Activated T-helper 1 cell treated with anti-CD3 and anti-CD28 coated beads, Interleukin-12 subunit alpha, Interleukin-12 subunit beta, Interleukin-2, Interleukin-4 antibody, amounts not matched to agents 30 ng/mL and 10 ng/mL and 1 ng/mL, durations not matched to agents 14 hours and 24 hours and 36 hours (primary cell): ENCODE measurements at regions of chr6 and their contacts with region 1.

Region 1: DNA sequence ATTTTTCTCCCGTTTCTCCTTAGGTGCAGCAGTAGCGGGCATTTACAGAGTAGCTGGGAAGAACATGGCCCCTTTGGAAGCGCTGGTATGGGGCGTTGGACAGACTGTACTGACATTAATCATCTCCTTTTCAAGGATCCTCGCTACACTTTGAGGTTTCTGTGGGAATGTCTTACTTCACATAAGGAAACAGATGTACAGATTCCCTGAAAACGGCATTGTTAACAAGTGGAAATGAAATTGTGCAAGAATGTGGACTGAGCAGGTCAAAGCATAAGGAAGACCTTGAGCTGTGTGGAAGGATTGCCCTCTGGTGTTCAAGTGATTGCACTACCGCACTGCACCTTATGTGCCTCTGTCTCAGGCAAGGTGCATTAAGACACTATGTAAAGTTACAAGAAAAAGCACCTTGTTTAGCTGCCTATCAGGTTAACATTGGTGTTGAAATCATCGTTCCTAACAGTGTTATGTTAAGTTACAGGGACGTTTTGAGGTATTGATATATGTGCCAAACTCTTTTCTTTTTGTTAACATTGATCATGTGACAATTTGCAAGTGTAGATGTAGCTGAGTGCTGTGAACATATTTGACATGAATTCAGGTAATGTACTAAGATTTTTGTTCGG is 38.0 kb downstream of the TMEM170B start:
- DNase-seq: peak; percentile 37
- H3K4me3 Mint-ChIP-seq: no peak overlapping the region
- H3K27ac Mint-ChIP-seq: no peak overlapping the region
- H3K4me1 Mint-ChIP-seq: no peaks in the 10 kb centered on the region
- H3K27me3 Mint-ChIP-seq: peaks cover 2% of the 10 kb centered on the region

Region 2: GRCh38 chr6:10954590-10955010 is 620.9 kb before region 1 on chr6:
- intact Hi-C with region 1: loop called (anchors 1 kb)
- DNase-seq: peak; percentile 50
- H3K4me3 Mint-ChIP-seq: no peak overlapping the region
- H3K27ac Mint-ChIP-seq: no peak overlapping the region
- H3K4me1 Mint-ChIP-seq: no peaks in the 10 kb centered on the region
- H3K27me3 Mint-ChIP-seq: peaks cover 7% of the 10 kb centered on the region

Region 3: DNA sequence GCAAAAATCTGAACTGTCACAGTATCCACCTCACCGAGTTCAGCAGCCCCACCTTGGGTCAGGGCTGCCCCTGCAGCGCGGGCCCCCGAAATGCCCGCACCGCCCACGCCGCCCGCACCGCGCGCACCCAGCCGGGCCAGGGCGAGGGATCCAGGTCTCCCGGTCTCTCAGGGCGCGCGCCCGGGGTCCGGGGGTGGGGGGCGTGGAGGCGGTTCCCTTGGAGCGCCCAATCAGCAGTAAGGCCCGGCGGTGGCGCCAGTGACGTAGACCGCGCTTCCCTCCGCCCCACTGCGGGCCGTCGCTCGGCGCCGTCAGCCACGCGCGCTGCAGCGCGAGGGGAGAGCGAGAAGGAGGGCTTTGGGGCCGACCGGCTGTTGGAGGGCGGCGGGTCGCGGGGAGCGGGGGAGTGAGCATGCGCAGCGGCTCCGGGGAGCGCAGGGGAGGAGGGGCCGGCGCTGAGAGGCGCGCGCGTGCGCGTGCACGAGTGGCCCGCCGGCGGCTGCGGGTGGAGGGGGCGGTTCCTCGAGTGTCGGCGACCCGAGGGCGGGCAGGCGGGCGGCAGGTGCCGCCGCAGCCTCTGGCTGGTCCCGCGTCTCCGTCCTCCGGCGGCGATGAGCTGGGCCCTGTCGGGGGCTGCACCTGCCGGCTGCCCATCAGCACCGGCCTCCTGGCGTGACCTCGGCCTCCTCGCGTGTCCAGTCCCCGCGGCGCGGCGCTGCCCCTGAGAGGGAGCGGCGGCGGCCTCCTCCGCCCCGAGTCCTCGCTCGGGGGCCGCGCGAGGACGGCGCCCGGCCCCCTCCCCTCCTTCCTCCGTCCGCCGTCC is 38.1 kb before region 1 on chr6 and contains the start of gene TMEM170B:
- intact Hi-C with region 1: loop called (anchors 2 kb)
- DNase-seq: peak; percentile 90
- H3K4me3 Mint-ChIP-seq: peak within 1 kb of the TSS; percentile 84
- H3K27ac Mint-ChIP-seq: peak within 1 kb of the TSS; percentile 68
- H3K4me1 Mint-ChIP-seq: peaks cover 17% of the 10 kb centered on the region
- H3K27me3 Mint-ChIP-seq: peaks cover 62% of the 10 kb centered on the region
- total RNA-seq, gene TMEM170B: 0.78 and 0.86 TPM in 2 replicates

Region 4: DNA sequence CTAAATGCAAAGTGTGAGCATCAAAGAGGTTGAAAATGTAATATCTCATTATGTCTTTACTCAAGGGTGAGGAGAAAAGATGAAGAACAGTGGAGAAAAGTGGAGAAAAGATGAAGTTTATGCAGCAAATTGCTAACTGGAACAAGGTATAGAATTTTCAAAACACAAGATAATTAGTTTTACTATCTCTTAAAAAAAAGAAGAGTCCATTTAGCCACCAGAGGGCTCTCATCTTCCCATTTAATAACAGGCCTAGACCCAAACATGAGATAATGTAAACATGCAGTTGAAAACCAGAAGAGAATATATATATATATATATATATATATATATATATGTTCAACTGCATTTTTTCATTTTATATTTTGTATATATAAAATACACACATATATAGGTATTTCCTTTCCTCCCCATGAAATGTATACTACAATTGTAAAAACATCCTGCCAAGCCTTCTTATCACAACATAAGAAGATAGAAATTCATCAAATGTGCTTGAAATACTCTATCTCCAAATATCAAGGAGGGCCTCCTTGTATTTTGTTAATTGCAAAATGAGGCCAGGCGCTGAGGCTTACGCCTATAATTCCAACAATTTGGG is 124.7 kb after region 1 on chr6:
- intact Hi-C with region 1: no loop called
- DNase-seq: no peak
- H3K4me3 Mint-ChIP-seq: no peak overlapping the region
- H3K27ac Mint-ChIP-seq: peak overlapping the region; percentile 37
- H3K4me1 Mint-ChIP-seq: peaks cover 26% of the 10 kb centered on the region
- H3K27me3 Mint-ChIP-seq: no peaks in the 10 kb centered on the region

Region 5: GRCh38 chr6:11744753-11745152 is 169.2 kb after region 1 on chr6:
- intact Hi-C with region 1: no loop called
- DNase-seq: no peak
- H3K4me3 Mint-ChIP-seq: no peak overlapping the region
- H3K27ac Mint-ChIP-seq: no peak overlapping the region
- H3K4me1 Mint-ChIP-seq: peaks cover 8% of the 10 kb centered on the region
- H3K27me3 Mint-ChIP-seq: peaks cover 2% of the 10 kb centered on the region